Calu3 (cell line): ENCODE measurements at regions of chr12 and their contacts with region 1.

Region 1: DNA sequence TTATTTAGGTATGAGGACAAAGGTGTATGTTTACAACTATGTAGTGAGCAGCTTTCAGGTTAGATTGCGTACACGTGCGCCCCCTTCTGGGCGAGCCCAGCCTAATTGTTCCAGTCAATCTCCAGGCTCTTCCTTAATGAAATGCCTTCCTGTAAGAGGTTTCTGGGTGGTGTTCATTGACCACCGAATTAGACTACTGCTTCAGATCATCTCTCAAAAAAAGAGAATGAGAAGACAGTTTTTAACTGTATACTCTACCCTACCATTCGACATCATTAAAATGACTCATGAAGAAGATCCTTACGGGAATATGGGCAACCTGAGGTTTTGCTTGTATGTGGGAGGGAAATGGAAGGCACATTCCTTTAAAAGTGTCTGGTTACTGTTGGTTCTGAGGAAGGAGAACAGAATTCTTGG is 2.1 kb downstream of the LUM start:
- DNase-seq: peak; percentile 88
- H3K4me3 Mint-ChIP-seq: no peak overlapping the region
- H3K27ac Mint-ChIP-seq: no peak overlapping the region
- H3K4me1 Mint-ChIP-seq: peaks cover 7% of the 10 kb centered on the region
- H3K27me3 Mint-ChIP-seq: no peaks in the 10 kb centered on the region
- CTCF ChIP-seq: peak; percentile 85

Region 2: GRCh38 chr12:90712671-90713070 is 396.5 kb before region 1 on chr12:
- CTCF ChIA-PET with region 1: no interaction called
- intact Hi-C with region 1: no loop called
- DNase-seq: no peak
- H3K4me3 Mint-ChIP-seq: no peak overlapping the region
- H3K27ac Mint-ChIP-seq: no peak overlapping the region
- H3K4me1 Mint-ChIP-seq: peaks cover 10% of the 10 kb centered on the region
- H3K27me3 Mint-ChIP-seq: no peaks in the 10 kb centered on the region
- CTCF ChIP-seq: no peak

Region 3: GRCh38 chr12:90978117-90978770 is 130.9 kb before region 1 on chr12:
- CTCF ChIA-PET with region 1: interaction called, 20 read pairs
- intact Hi-C with region 1: loop called (anchors 1 kb)
- DNase-seq: no peak
- H3K4me3 Mint-ChIP-seq: no peak overlapping the region
- H3K27ac Mint-ChIP-seq: no peak overlapping the region
- H3K4me1 Mint-ChIP-seq: peaks cover 25% of the 10 kb centered on the region
- H3K27me3 Mint-ChIP-seq: no peaks in the 10 kb centered on the region
- CTCF ChIP-seq: peak; percentile 60

Region 4: DNA sequence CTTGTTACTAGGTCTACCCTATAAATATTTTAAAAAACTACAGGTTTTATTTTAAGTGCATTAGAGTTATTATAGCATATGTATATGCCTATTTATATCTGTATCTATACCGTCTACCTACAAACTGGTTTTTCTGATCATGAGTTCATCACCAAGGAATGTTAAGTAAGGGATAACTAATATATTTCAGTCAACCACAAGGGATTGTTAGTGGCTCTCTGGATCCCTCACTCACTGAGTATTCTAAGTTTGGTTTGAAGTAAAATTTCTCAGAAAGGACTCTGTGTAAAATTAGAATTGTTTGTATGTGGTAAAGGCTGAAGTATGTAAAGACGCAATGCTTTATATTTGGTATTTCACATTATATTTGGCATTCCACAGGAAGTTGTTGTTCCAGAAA is 109.2 kb before region 1 on chr12:
- CTCF ChIA-PET with region 1: no interaction called
- intact Hi-C with region 1: loop called (anchors 5 kb)
- DNase-seq: no peak
- H3K4me3 Mint-ChIP-seq: no peak overlapping the region
- H3K27ac Mint-ChIP-seq: no peak overlapping the region
- H3K4me1 Mint-ChIP-seq: peaks cover 27% of the 10 kb centered on the region
- H3K27me3 Mint-ChIP-seq: no peaks in the 10 kb centered on the region
- CTCF ChIP-seq: no peak

Region 5: GRCh38 chr12:91326058-91327027 is 217.2 kb after region 1 on chr12:
- CTCF ChIA-PET with region 1: interaction called, 6 read pairs
- intact Hi-C with region 1: loop called (anchors 5 kb)
- DNase-seq: peak; percentile 70
- H3K4me3 Mint-ChIP-seq: no peak overlapping the region
- H3K27ac Mint-ChIP-seq: no peak overlapping the region
- H3K4me1 Mint-ChIP-seq: no peaks in the 10 kb centered on the region
- H3K27me3 Mint-ChIP-seq: no peaks in the 10 kb centered on the region
- CTCF ChIP-seq: peak; percentile 67

Region 6: DNA sequence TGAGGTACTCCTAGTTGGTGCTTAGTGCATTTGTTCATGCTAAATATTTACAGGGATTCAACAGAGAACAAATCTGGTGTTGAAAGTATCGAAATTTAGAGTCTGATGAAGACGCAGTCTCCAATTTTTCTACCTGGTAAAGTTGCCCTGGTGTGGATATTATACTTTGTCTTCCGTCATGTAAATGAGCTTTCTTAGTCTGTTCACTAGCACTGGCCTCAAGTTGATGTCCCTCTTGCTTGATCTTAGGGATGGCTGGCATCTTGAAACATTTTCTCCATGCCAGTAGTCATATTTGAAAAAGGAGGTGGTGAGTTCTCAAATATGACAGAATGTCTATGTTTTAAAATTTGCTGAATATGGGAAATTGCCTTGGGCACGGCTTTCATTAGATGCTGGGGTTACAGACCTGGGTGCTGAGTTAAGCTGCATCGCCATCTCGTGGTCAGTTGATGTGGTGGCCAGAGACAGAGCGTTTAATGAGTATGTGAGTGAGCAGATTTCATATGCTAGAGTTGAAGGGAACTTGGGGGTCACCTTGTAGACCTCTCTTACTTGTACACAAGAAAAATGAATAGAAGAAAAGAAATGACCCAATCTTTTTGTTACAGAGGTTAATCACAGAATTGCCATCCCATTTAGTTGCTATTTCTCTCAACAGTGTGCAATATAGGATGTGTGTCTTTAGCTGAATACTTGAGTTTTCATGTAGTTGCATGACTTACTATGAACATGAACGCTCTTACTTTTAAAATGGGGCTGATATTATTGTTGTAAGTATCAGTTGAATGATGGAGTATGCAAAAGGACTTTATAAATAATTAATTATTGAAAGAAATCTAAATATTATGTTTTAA is 246.2 kb after region 1 on chr12:
- CTCF ChIA-PET with region 1: interaction called, 3 read pairs
- intact Hi-C with region 1: loop called (anchors 2 kb)
- DNase-seq: peak; percentile 73
- H3K4me3 Mint-ChIP-seq: no peak overlapping the region
- H3K27ac Mint-ChIP-seq: no peak overlapping the region
- H3K4me1 Mint-ChIP-seq: peaks cover 27% of the 10 kb centered on the region
- H3K27me3 Mint-ChIP-seq: no peaks in the 10 kb centered on the region
- CTCF ChIP-seq: peak; percentile 74